ENCODE measurements at regions of chr2 and their contacts with region 1.

Region 1: GRCh38 chr2:37890893-37891495 is 34.1 kb upstream of the RMDN2 start:
- DNase-seq: no peak
- ATAC-seq: peak; percentile 84
- H3K4me3 ChIP-seq: no peak overlapping the region
- H3K27ac ChIP-seq: no peak overlapping the region
- H3K4me1 ChIP-seq: peaks cover 43% of the 10 kb centered on the region
- H3K27me3 ChIP-seq: no peaks in the 10 kb centered on the region
- CTCF ChIP-seq: peak; percentile 73 to 84 (median 82)
- EP300 ChIP-seq: peak in 1 of 2 experiments; percentile 15; a peak in 1 of 4 replicates
- POLR2A ChIP-seq: no peak
- RAD21 ChIP-seq: peak; percentile 88

Region 2: DNA sequence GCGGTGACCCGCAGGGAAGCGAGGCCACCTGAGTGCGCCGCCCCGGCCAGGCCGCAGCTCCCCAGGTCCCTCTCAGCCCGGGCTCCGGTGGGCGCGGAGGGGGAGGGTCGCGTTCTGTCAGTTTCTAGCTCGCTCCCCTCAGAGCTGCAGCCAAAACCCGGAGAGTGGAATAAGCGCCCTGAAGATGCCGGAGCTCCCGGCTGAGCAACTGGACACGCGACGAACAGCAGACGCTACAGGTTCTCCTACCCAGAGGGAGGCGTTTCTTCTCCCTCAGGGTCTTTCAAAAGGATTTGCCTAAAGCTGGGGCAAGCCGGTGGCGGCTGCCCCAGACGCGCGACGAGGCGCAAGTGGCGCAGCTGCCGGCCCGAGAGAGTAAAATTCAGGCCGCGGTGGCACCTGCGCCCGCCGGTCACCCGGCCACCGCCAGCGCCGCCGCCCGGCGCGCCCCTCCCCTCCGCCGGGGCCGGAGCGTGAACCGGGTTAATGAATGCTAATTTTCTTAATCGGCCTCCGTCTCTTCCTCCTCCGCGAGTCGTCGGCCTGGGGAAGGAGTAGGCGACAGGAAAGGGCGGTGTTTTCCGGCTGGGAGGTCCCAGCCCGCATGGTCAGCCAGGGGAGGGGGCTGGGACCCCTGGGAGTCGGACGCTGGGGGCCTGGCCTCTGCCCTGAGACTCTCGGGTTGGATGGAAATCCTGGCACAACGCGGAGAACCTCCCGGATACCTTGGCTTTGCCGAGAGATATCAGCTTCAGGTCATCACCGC is 218.7 kb before region 1 on chr2:
- CTCF ChIA-PET with region 1: no interaction called
- POLR2A ChIA-PET with region 1: no interaction called
- RAD21 ChIA-PET with region 1: interaction called, 5 read pairs
- SMC1A ChIA-PET with region 1: no interaction called
- in situ Hi-C with region 1: no loop called
- intact Hi-C with region 1: loop called (anchors 5 kb)
- DNase-seq: no peak
- ATAC-seq: peak; percentile 58
- H3K4me3 ChIP-seq: peak overlapping the region; percentile 87
- H3K27ac ChIP-seq: peak overlapping the region; percentile 77
- H3K4me1 ChIP-seq: no peaks in the 10 kb centered on the region; the same call in 1 of the 2 replicates
- H3K27me3 ChIP-seq: no peaks in the 10 kb centered on the region
- CTCF ChIP-seq: no peak
- EP300 ChIP-seq: no peak
- POLR2A ChIP-seq: peak; percentile 51; the same call in 1 of the 2 replicates
- RAD21 ChIP-seq: no peak

Region 3: GRCh38 chr2:37934591-37935513 is 43.9 kb after region 1 on chr2:
- CTCF ChIA-PET with region 1: interaction called, 3 read pairs
- POLR2A ChIA-PET with region 1: interaction called, 3 read pairs
- RAD21 ChIA-PET with region 1: interaction called, 6 read pairs
- SMC1A ChIA-PET with region 1: interaction called, 11 read pairs
- in situ Hi-C with region 1: no loop called
- intact Hi-C with region 1: loop called (anchors 2 kb)
- DNase-seq: peak; percentile 41
- ATAC-seq: peak; percentile 94
- H3K4me3 ChIP-seq: peak overlapping the region; percentile 69
- H3K27ac ChIP-seq: peak overlapping the region; percentile 93
- H3K4me1 ChIP-seq: peaks cover 15% of the 10 kb centered on the region
- H3K27me3 ChIP-seq: no peaks in the 10 kb centered on the region
- CTCF ChIP-seq: no peak
- EP300 ChIP-seq: peak; percentile 62 to 84
- POLR2A ChIP-seq: no peak
- RAD21 ChIP-seq: peak; percentile 27

Region 4: GRCh38 chr2:38076606-38077430 is 185.8 kb after region 1 on chr2:
- CTCF ChIA-PET with region 1: no interaction called
- POLR2A ChIA-PET with region 1: no interaction called
- RAD21 ChIA-PET with region 1: no interaction called
- SMC1A ChIA-PET with region 1: no interaction called
- in situ Hi-C with region 1: no loop called
- intact Hi-C with region 1: loop called (anchors 10 kb)
- DNase-seq: no peak
- ATAC-seq: peak; percentile 79
- H3K4me3 ChIP-seq: peak overlapping the region; percentile 71
- H3K27ac ChIP-seq: peak overlapping the region; percentile 77
- H3K4me1 ChIP-seq: peaks cover 11% of the 10 kb centered on the region
- H3K27me3 ChIP-seq: no peaks in the 10 kb centered on the region; a peak in 2 of 4 replicates
- CTCF ChIP-seq: peak; percentile 12 to 37 (median 34); a peak in 4 of 6 replicates
- EP300 ChIP-seq: peak; percentile 94 to 97
- POLR2A ChIP-seq: peak; percentile 63
- RAD21 ChIP-seq: peak; percentile 46; the same call in 1 of the 2 replicates